ENCODE measurements at regions of chr19 and their contacts with region 1.

Region 1: DNA sequence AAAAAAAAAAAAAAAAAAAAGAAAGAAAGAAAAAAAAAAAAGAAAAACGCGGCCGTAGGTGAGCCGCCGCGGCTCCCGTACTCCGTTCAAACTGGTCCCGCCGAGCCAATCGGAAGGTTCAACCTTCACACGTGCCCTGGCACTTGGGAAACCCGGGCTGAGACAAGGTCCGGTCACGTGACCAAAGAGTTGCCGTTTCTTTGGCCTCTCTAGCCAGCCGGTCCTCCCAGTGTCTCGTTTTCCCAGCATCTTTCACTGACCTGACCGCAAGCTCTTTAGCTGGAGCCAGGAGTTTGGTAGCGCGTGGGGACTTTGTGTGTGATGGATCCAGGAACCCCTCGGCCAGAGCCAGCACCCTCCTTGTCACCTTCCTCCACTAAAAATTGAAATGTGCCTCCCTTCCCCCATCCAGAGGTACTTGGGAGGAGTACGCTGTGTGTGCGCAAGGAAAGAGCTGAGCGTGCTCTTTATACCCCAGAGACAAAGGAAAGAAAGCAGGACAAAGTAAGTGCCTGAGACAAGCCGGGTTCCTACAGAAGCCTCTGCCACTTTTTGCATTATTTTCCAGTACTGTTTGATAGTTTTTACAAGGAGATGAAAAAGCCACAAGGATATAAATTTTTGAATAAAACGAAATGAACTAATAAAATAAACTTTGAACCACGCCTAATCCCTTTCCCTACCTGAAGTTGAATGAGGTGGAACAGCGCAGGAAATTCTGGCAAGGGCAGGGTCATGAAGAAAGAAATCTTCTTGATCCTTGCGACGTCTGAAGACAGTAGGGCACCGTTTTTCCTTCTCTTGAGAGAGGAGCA is 959 bp downstream of the TNPO2 start:
- DNase-seq: peak; percentile 98
- ATAC-seq: peak; percentile 82
- H3K4me3 Mint-ChIP-seq: peak overlapping the region; percentile 96
- H3K27ac Mint-ChIP-seq: peak overlapping the region; percentile 91
- H3K4me1 Mint-ChIP-seq: peaks cover 29% of the 10 kb centered on the region
- H3K27me3 Mint-ChIP-seq: no peaks in the 10 kb centered on the region
- CTCF ChIP-seq: no peak

Region 2: DNA sequence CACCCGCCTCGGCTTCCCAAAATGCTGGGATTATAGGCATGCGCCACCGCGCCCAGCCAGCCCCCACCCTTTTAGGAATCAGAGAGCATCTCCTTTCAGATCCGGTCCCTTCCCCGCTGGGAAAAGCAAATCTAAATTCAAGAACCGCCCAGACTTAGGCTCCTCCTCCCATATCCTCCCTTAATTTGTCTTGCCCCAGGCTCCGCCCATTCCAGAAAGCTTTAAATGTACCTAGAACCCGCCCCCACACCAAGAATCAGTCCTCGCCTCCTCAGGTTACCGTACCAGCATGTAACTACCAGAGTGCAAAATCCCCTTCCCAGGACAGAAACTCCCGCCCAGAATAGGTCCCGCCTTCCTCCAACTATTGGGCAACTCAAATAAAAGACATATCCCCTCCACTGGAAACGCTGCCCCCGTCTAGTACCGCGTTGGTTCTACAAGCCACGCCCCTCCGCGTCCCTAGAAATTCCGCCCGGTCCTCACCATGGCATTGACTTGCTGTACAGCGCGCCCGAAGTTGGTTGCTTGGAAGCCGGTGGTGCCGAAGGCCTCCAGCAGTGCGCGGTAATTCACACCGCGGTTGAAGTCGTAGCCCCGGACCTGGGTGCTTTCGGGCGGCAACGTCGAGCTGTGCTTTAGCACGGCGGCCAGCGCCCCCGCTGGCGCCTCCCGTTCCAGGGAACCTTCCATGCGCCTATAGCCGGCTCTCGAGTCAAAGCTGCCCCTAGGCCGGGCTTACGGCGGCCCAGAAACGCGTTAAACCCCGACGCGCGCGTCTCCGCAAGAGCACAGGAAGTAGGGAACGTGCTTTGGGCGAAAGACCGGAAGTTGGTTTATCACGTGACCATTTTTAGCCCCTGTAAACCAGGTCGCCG is 41.5 kb before region 1 on chr19 and contains the start of gene DHPS:
- CTCF ChIA-PET with region 1: interaction called, 4 read pairs
- POLR2A ChIA-PET with region 1: interaction called, 11 read pairs
- intact Hi-C with region 1: no loop called
- DNase-seq: peak; percentile 97
- ATAC-seq: peak; percentile 89
- H3K4me3 Mint-ChIP-seq: peak within 1 kb of the TSS; percentile 93
- H3K27ac Mint-ChIP-seq: peak within 1 kb of the TSS; percentile 94
- H3K4me1 Mint-ChIP-seq: peaks cover 25% of the 10 kb centered on the region
- H3K27me3 Mint-ChIP-seq: no peaks in the 10 kb centered on the region
- CTCF ChIP-seq: no peak
- total RNA-seq, gene DHPS: 113 TPM

Region 3: DNA sequence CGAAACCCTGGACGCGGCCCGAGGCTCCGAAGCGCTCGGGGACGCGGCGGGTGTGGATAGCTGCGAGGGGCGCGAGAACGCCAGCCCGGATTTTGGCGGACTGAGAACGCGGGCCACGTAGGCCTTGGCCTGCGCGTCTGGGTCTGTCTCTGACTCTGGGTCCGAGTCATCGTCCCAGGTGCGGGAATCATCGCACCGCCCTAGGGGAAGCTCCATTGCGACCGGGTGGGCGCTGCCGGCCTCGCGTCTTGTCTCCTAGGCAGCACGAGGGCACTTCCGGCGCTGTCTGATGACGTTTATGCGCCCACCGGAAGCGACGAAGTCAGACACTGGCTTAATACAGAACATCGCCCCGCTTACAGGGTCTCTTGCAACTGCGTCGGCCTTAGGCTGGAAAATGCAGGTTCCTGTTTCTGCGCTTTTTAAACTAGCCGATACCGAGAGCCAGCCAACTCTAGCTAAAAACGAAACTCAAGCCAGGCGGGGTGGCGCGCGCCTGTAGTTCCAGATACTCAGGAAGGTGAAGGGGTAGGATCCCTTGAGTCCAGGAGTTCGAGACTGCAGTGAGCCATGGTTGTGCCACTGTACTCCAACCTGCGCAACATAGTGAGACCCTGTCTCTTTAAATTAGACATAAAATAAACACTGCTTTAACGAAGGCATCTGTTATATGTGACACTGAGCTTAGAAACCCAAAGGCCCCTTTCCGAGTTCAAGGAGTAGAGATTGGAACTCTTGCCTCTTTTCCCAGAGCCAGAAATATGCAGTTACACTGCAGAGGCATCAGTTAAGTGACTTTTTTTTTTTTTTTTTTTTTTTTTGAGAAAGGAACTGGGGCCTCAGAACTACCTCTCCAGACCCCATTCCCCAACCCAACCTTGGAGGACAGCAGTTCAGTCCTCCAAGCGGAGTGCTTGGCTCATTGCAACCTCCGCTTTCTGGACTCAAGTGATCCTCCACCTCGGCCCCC is 26.1 kb before region 1 on chr19 and contains the start of gene FBXW9:
- CTCF ChIA-PET with region 1: interaction called, 4 read pairs
- POLR2A ChIA-PET with region 1: interaction called, 18 read pairs
- intact Hi-C with region 1: no loop called
- DNase-seq: peak; percentile 99
- ATAC-seq: peak; percentile 92
- H3K4me3 Mint-ChIP-seq: peak within 1 kb of the TSS; percentile 79
- H3K27ac Mint-ChIP-seq: peak within 1 kb of the TSS; percentile 96
- H3K4me1 Mint-ChIP-seq: peaks cover 13% of the 10 kb centered on the region
- H3K27me3 Mint-ChIP-seq: no peaks in the 10 kb centered on the region
- CTCF ChIP-seq: no peak
- total RNA-seq, gene FBXW9: 9.9 to 10.8 TPM

Region 4: DNA sequence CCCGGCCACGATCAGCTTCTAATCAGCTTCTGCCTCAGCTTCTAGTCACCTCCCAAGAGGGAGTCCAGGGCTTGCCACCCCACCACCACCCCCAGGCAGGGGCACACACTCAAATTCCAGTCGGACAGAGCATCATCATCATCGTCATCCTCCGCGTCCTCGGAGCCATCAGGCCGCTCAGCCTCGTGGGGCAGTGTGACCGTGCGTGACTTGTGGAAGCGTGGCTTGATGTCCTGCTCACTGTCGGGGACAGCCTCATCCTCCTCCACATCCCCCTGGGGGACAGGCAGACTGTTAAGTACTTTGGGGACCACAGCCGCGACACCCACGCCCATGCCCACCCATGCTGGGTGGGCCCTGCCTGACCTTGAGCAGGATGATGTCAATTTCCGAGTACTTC is 11.6 kb before region 1 on chr19:
- CTCF ChIA-PET with region 1: interaction called, 6 read pairs
- POLR2A ChIA-PET with region 1: interaction called, 23 read pairs
- intact Hi-C with region 1: no loop called
- DNase-seq: no peak
- ATAC-seq: no peak
- H3K4me3 Mint-ChIP-seq: no peak overlapping the region
- H3K27ac Mint-ChIP-seq: no peak overlapping the region
- H3K4me1 Mint-ChIP-seq: no peaks in the 10 kb centered on the region
- H3K27me3 Mint-ChIP-seq: no peaks in the 10 kb centered on the region
- CTCF ChIP-seq: no peak

Region 5: GRCh38 chr19:12736995-12737834 is 14.4 kb after region 1 on chr19 and contains the start of gene GET3:
- CTCF ChIA-PET with region 1: interaction called, 32 read pairs
- POLR2A ChIA-PET with region 1: interaction called, 160 read pairs
- intact Hi-C with region 1: loop called (anchors 2 kb)
- DNase-seq: peak; percentile 89
- ATAC-seq: peak; percentile 84
- H3K4me3 Mint-ChIP-seq: peak within 1 kb of the TSS; percentile 99
- H3K27ac Mint-ChIP-seq: peak within 1 kb of the TSS; percentile 98
- H3K4me1 Mint-ChIP-seq: peaks cover 35% of the 10 kb centered on the region
- H3K27me3 Mint-ChIP-seq: no peaks in the 10 kb centered on the region
- CTCF ChIP-seq: no peak
- total RNA-seq, gene GET3: 50.7 to 52.2 TPM

Region 6: GRCh38 chr19:12789904-12790619 is 67.3 kb after region 1 on chr19:
- CTCF ChIA-PET with region 1: interaction called, 3 read pairs
- POLR2A ChIA-PET with region 1: interaction called, 11 read pairs
- intact Hi-C with region 1: no loop called
- DNase-seq: peak; percentile 98
- ATAC-seq: peak; percentile 52
- H3K4me3 Mint-ChIP-seq: peak overlapping the region; percentile 95
- H3K27ac Mint-ChIP-seq: peak overlapping the region; percentile 98
- H3K4me1 Mint-ChIP-seq: peaks cover 34% of the 10 kb centered on the region
- H3K27me3 Mint-ChIP-seq: no peaks in the 10 kb centered on the region
- CTCF ChIP-seq: no peak

Measured in activated CD8-positive, alpha-beta T cell treated with anti-CD3 and anti-CD28 coated beads for 36 hours (primary cell).